PC-9 (cell line): ENCODE measurements at regions of chr15 and their contacts with region 1.

Region 1: GRCh38 chr15:67296188-67296587 is 41.6 kb downstream of the IQCH start:
- DNase-seq: no peak
- H3K4me3 ChIP-seq: no peak overlapping the region
- H3K27ac ChIP-seq: no peak overlapping the region
- H3K4me1 ChIP-seq: no peaks in the 10 kb centered on the region
- H3K27me3 ChIP-seq: no peaks in the 10 kb centered on the region
- CTCF ChIP-seq: no peak

Region 2: GRCh38 chr15:66580643-66581042 is 715.5 kb before region 1 on chr15:
- CTCF ChIA-PET with region 1: no interaction called
- POLR2A ChIA-PET with region 1: no interaction called
- intact Hi-C with region 1: no loop called
- DNase-seq: peak in 1 of 2 experiments; percentile 10
- H3K4me3 ChIP-seq: no peak overlapping the region
- H3K27ac ChIP-seq: no peak overlapping the region
- H3K4me1 ChIP-seq: no peaks in the 10 kb centered on the region
- H3K27me3 ChIP-seq: no peaks in the 10 kb centered on the region
- CTCF ChIP-seq: no peak

Region 3: DNA sequence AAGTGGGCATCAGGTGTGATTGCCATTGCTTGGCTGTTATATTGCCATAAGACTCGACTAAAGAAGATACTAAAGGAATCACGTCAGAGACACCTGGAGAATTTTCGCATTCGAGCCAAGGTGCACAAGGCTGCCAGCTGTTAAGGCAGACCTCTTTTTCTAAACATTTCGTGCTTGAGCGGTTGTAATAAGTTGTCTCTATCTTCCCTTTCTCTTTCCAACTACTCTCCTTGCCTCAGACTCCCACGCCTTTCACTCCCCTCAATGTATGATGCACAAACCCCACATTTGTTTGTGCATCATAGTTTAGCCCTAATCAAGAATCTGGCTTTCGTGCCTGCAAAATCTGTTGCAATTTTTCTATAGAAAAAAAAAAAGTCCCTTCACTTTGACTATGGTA is 76.4 kb after region 1 on chr15:
- CTCF ChIA-PET with region 1: no interaction called
- POLR2A ChIA-PET with region 1: interaction called, 10 read pairs
- intact Hi-C with region 1: no loop called
- DNase-seq: no peak
- H3K4me3 ChIP-seq: no peak overlapping the region
- H3K27ac ChIP-seq: no peak overlapping the region
- H3K4me1 ChIP-seq: no peaks in the 10 kb centered on the region
- H3K27me3 ChIP-seq: no peaks in the 10 kb centered on the region
- CTCF ChIP-seq: no peak

Region 4: GRCh38 chr15:67396114-67396513 is 99.9 kb after region 1 on chr15:
- CTCF ChIA-PET with region 1: no interaction called
- POLR2A ChIA-PET with region 1: no interaction called
- intact Hi-C with region 1: no loop called
- DNase-seq: no peak
- H3K4me3 ChIP-seq: no peak overlapping the region
- H3K27ac ChIP-seq: no peak overlapping the region
- H3K4me1 ChIP-seq: no peaks in the 10 kb centered on the region
- H3K27me3 ChIP-seq: no peaks in the 10 kb centered on the region
- CTCF ChIP-seq: no peak